Natural killer cell (primary cell): ENCODE measurements at regions of chr2 and their contacts with region 1.

Region 1: DNA sequence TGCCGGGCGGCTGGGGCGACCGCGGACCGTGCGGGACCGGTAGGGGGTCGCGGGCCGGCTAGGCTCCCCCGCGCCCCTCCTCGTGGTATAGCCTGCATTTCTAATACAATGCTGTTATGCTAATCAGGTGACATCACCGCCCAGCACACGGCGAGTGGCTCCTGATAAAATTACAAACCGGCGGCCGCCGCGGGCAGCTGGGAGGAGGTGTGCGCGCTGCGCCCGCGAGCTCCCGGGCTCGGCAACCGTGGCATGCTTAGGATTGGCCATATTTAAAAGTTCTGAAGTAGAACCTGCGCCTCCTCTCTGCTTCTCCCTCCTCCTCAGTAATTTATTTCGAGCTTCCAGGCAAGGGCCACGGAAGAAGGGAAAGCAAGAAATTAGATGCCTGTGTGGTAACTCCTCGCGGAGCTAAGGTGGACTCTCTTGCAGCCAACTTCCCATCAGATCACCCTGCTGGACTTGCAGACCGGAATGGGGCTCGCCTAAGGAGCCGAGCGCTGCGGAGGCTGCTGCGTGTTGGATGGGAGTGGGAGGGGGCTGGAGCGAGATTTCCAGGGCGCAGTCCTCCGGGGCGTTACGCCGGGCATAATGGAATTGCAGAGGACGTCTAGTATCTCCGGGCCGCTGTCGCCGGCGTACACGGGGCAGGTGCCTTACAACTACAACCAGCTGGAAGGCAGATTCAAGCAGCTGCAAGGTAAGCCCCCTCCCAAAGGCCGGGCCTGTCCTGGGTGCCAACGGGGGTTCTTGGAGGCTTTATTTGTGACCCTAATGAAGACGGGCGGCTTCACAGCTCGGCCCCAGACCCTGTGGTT is 102.3 kb downstream of the SPTBN1 start:
- DNase-seq: peak; percentile 50 to 85
- ATAC-seq: peak; percentile 62 to 75 (median 70)
- H3K4me3 ChIP-seq: peak overlapping the region; percentile 92
- H3K4me3 Mint-ChIP-seq: peak overlapping the region; percentile 96
- H3K27ac ChIP-seq: peak overlapping the region; percentile 90
- H3K27ac Mint-ChIP-seq: peak overlapping the region; percentile 90 to 96
- H3K4me1 ChIP-seq: peaks cover 22% of the 10 kb centered on the region
- H3K4me1 Mint-ChIP-seq: peaks cover 59 to 63% of the 10 kb centered on the region in 2 donors
- H3K27me3 ChIP-seq: no peaks in the 10 kb centered on the region
- H3K27me3 Mint-ChIP-seq: no peaks in the 10 kb centered on the region
- CTCF ChIP-seq: no peak

Region 2: GRCh38 chr2:53802617-53803151 is 755.7 kb before region 1 on chr2:
- intact Hi-C with region 1: no loop called
- DNase-seq: no peak
- ATAC-seq: no peak
- H3K4me3 ChIP-seq: no peak overlapping the region
- H3K4me3 Mint-ChIP-seq: no peak overlapping the region
- H3K27ac ChIP-seq: no peak overlapping the region
- H3K27ac Mint-ChIP-seq: peak overlapping the region in 1 of 2 donors; percentile 0
- H3K4me1 ChIP-seq: no peaks in the 10 kb centered on the region
- H3K4me1 Mint-ChIP-seq: no peaks in the 10 kb centered on the region
- H3K27me3 ChIP-seq: no peaks in the 10 kb centered on the region
- H3K27me3 Mint-ChIP-seq: no peaks in the 10 kb centered on the region
- CTCF ChIP-seq: no peak

Region 3: GRCh38 chr2:54574107-54574859 is 15.9 kb after region 1 on chr2:
- intact Hi-C with region 1: loop called (anchors 1 kb)
- DNase-seq: peak; percentile 67 to 92
- ATAC-seq: peak; percentile 74 to 93 (median 79)
- H3K4me3 ChIP-seq: peak overlapping the region; percentile 45
- H3K4me3 Mint-ChIP-seq: peak overlapping the region; percentile 79
- H3K27ac ChIP-seq: peak overlapping the region; percentile 95
- H3K27ac Mint-ChIP-seq: peak overlapping the region; percentile 97 to 98
- H3K4me1 ChIP-seq: peaks cover 81% of the 10 kb centered on the region
- H3K4me1 Mint-ChIP-seq: peaks cover 83 to 98% of the 10 kb centered on the region in 2 donors
- H3K27me3 ChIP-seq: no peaks in the 10 kb centered on the region
- H3K27me3 Mint-ChIP-seq: no peaks in the 10 kb centered on the region
- CTCF ChIP-seq: no peak

Region 4: DNA sequence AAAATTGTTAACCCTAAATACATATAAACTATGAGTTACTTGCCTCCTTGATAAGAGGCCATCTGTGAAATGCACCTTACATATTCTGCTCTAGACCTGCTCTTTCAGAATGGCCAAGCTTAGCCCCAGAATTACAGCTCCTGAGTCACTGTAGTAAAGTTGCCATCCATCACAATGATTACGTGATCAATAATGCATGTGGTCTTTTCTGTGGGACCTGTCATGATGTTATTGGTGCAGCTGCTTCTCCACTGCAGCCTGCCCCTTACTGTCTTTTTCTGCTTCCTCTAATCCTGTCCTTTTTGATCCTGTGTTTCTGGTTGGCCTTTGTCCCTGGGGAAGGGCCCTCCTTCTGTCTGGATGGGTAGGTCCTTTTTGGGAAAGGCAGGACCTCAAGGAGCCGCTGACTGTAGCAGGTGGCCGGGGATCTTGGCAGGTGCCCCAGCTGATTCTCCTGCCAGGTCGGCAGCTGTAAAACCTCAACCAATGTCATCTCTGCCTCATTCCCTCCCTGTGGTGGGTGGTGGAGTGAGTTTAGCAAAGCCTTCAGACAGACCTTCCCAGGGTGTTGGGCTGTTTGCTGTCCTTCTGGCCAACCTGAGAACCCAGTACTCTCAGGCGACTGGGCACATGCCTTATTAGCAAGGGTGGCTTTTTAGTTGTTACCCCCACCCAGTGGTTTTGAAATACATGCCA is 38.9 kb after region 1 on chr2:
- intact Hi-C with region 1: loop called (anchors 2 kb)
- DNase-seq: peak in 1 of 2 donors; percentile 54
- ATAC-seq: peak; percentile 60 to 77 (median 75)
- H3K4me3 ChIP-seq: no peak overlapping the region
- H3K4me3 Mint-ChIP-seq: peak overlapping the region; percentile 68
- H3K27ac ChIP-seq: peak overlapping the region; percentile 10
- H3K27ac Mint-ChIP-seq: peak overlapping the region; percentile 83 to 89
- H3K4me1 ChIP-seq: peaks cover 64% of the 10 kb centered on the region
- H3K4me1 Mint-ChIP-seq: peaks cover 50 to 65% of the 10 kb centered on the region in 2 donors
- H3K27me3 ChIP-seq: no peaks in the 10 kb centered on the region
- H3K27me3 Mint-ChIP-seq: no peaks in the 10 kb centered on the region
- CTCF ChIP-seq: no peak